ENCODE measurements at regions of chr6 and their contacts with region 1.

Region 1: DNA sequence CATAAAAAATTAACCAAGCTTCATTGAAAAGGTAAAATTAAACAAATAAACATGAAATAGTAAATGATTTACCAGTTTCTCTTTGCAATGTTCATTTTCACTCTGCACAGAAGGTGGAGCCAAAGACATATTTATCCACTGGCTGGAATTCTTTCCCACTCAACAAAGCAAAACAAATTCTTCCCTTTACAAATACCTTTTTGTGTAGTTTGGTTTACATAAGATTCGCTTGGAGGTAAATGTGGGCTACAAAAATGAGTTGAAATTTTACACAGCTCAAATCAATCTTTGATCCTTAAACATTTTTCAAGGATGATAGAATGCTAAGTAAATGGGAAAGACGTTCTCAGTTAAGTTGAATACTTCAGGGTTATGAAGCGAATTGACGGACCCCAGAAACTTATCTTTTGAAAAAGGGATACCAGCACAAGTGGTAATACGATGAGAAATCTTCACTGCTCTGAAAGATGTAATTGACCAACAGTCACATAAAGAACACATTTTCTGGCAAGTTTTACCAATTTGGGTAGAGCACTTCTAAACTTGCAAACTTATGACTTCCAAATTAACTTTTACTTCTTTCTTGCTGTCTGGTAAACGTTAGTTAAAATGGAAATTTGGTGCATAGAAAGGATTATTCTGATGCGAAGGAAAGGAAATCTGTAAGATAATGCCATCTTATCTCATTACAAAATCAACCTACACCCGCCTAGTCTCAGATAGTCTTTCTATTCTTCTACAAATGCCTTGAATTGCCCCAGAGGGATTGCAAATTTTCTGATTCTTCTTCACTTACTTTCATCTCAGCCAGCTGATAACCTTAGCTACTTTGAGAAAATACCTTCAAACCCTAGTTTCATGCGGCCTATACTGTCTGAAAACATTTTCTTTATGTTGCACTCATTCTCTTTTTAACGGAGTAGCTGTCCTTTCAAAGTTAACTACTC is 4.7 kb upstream of the GJA1 start:
- DNase-seq: no peak
- ATAC-seq: no peak
- H3K4me3 ChIP-seq: peak overlapping the region in 1 of 2 donors; percentile 72
- H3K27ac ChIP-seq: no peak overlapping the region
- H3K4me1 ChIP-seq: peaks cover 0 to 3% of the 10 kb centered on the region in 2 donors
- H3K27me3 ChIP-seq: no peaks in the 10 kb centered on the region

Region 2: DNA sequence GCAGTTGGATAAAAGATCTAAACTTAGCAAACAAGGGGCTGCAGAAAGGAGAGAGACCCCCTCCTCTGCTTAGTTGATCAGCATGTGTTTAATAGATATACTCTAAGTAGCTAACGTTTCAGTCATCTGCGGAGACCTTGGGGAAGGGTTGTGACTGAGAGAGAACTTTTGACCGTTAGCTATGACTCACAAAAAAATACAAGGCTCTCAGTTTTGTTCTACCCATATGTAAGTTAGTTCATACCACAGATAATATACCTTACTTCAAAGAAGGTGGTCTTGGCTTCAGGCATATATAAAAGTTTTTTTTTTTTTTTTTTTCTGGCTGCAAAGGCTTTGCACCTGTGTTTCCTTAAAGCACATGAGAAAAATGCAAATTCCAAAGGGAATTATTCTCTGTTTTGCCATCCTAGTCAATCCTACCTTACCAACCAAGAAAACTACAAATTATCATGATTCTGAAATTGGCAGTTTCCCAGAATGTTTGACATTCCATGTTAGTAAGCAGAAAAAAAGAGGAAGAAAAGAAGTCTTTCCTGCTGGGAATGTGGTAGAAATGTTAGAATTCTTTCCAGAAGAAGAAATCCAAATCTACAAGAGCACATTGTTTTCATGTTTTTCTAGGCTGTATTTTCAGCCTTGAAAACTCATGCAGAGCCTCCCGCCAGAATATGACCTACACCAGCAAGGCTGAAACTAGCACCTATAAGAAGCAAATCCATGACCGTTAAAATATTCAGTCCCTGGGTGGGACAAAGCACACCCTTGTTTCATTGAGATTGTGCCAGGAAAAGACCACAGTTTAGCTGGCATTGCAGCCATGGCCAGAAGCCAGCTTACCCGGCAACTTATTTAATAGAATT is 263.8 kb after region 1 on chr6:
- intact Hi-C with region 1: loop called (anchors 10 kb)
- DNase-seq: no peak
- ATAC-seq: peak; percentile 63
- H3K4me3 ChIP-seq: peak overlapping the region in 1 of 2 donors; percentile 10
- H3K27ac ChIP-seq: peak overlapping the region; percentile 28 to 92
- H3K4me1 ChIP-seq: peaks cover 0 to 7% of the 10 kb centered on the region in 2 donors
- H3K27me3 ChIP-seq: no peaks in the 10 kb centered on the region

Region 3: GRCh38 chr6:121849477-121849876 is 418.7 kb after region 1 on chr6:
- intact Hi-C with region 1: loop called (anchors 2 to 5 kb)
- DNase-seq: peak in 1 of 2 donors; percentile 51
- ATAC-seq: peak; percentile 89
- H3K4me3 ChIP-seq: no peak overlapping the region
- H3K27ac ChIP-seq: no peak overlapping the region
- H3K4me1 ChIP-seq: peaks cover 1 to 4% of the 10 kb centered on the region in 2 donors
- H3K27me3 ChIP-seq: no peaks in the 10 kb centered on the region

Region 4: GRCh38 chr6:121856296-121856695 is 425.5 kb after region 1 on chr6:
- intact Hi-C with region 1: loop called in 1 of 2 experiments (anchors 5 kb)
- DNase-seq: no peak
- ATAC-seq: no peak
- H3K4me3 ChIP-seq: no peak overlapping the region
- H3K27ac ChIP-seq: peak overlapping the region in 1 of 2 donors; percentile 57
- H3K4me1 ChIP-seq: peaks cover 0 to 3% of the 10 kb centered on the region in 2 donors
- H3K27me3 ChIP-seq: no peaks in the 10 kb centered on the region

Region 5: GRCh38 chr6:121944354-121944753 is 513.6 kb after region 1 on chr6:
- intact Hi-C with region 1: loop called in 1 of 2 experiments (anchors 10 kb)
- DNase-seq: no peak
- ATAC-seq: no peak
- H3K4me3 ChIP-seq: no peak overlapping the region
- H3K27ac ChIP-seq: no peak overlapping the region
- H3K4me1 ChIP-seq: no peaks in the 10 kb centered on the region
- H3K27me3 ChIP-seq: no peaks in the 10 kb centered on the region

Region 6: DNA sequence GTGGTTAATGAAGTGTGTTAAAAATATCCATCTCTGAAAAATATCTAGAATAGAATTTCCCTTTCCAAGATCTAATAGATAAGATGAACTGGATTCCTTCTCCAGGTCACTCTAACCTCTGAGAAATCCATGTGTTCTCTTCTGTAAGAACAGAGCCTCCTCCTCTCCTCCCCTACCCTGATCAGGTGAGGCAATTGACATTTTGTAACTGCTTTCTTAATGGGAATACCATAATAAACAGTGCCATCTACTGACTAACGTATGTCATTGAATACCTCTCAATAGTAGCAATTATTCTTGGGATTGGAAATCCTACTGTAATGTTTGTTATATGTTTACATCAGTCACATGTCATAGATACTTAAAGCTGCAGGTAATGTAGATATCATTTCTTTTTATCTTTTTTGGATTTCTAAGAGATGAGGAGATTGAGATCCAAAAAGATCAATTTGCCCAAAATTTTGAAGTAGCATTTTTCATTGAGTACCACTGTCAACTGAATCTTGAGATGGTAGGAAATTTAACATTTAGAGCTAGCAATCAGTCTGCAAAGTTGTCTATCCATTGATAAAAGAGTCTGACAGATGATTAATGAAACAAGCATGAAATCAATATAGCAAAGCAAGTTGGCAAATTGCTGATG is 602.9 kb after region 1 on chr6:
- intact Hi-C with region 1: loop called (anchors 2 kb)
- DNase-seq: no peak
- ATAC-seq: peak; percentile 85
- H3K4me3 ChIP-seq: no peak overlapping the region
- H3K27ac ChIP-seq: no peak overlapping the region
- H3K4me1 ChIP-seq: no peaks in the 10 kb centered on the region
- H3K27me3 ChIP-seq: no peaks in the 10 kb centered on the region

Region 7: DNA sequence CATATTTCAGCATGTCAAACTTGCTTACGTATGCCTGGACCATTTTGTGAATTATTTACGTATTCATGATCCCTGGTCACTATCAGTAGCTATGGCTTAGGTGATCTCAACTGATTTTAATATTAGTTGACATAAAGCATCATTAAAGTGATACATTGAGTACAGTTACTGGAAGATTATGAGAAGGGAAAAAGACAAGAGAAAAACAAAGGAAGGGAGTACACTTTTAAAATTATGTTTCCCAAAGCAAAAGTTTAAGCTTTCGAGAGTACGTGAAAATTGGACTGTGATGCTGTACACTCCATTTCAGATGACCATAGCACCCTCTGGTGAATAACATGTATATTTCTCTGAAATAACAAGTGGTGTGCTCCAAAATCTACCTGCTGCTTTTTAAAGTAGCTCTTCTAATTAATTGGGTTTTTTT is 753.6 kb after region 1 on chr6:
- intact Hi-C with region 1: loop called (anchors 2 to 5 kb)
- DNase-seq: no peak
- ATAC-seq: peak; percentile 65
- H3K4me3 ChIP-seq: peak overlapping the region; percentile 36 to 48
- H3K27ac ChIP-seq: no peak overlapping the region
- H3K4me1 ChIP-seq: no peaks in the 10 kb centered on the region
- H3K27me3 ChIP-seq: no peaks in the 10 kb centered on the region